ENCODE measurements at regions of chr18 and their contacts with region 1.

Region 1: GRCh38 chr18:12867441-12868123 is 16.5 kb downstream of the PTPN2 start:
- DNase-seq: no peak
- H3K4me3 ChIP-seq: no peak overlapping the region
- H3K27ac ChIP-seq: peak overlapping the region; percentile 54
- H3K4me1 ChIP-seq: peaks cover 43% of the 10 kb centered on the region
- CTCF ChIP-seq: no peak

Region 2: DNA sequence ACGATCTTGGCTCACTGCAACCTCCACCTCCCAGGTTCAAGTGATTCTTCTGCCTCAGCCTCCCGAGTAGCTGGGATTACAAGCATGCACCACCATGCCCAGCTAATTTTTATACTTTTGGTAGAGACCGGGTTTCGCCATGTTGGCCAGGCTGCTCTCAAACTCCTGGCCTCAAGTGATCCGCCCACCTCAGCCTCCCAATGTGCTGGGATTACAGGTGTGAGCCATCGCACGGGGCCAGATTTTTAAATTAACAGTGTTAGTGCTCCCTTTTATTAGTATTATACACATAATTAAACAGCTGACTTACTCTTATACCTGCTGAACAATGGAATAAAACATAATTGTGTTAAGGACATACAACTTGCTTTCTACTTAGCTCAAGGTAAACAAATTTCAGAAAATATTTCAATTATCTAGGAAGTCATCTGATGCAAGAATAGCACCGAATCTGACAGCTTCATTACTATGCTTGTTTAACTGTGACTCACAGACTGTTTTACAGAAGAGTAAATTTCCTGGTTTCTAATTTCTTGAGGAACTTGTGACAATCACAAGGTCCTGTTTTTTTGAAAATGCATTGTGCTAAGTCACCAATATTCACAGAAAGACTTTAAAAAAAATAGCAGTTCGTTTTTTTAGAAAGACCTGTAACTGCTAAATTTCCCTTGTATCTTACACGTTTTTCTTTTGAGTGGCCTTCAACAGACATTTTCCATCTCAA is 260.8 kb before region 1 on chr18:
- CTCF ChIA-PET with region 1: no interaction called
- POLR2A ChIA-PET with region 1: no interaction called
- intact Hi-C with region 1: no loop called
- DNase-seq: no peak
- H3K4me3 ChIP-seq: no peak overlapping the region
- H3K27ac ChIP-seq: no peak overlapping the region
- H3K4me1 ChIP-seq: no peaks in the 10 kb centered on the region
- CTCF ChIP-seq: no peak

Region 3: GRCh38 chr18:12883684-12884405 is 16.3 kb after region 1 on chr18 and contains the start of gene PTPN2:
- CTCF ChIA-PET with region 1: interaction called, 3 read pairs
- POLR2A ChIA-PET with region 1: interaction called, 52 read pairs
- intact Hi-C with region 1: loop called (anchors 2 kb)
- DNase-seq: peak; percentile 95
- H3K4me3 ChIP-seq: peak within 1 kb of the TSS; percentile 78
- H3K27ac ChIP-seq: peak within 1 kb of the TSS; percentile 86
- H3K4me1 ChIP-seq: peaks cover 61% of the 10 kb centered on the region
- CTCF ChIP-seq: no peak
- total RNA-seq, gene PTPN2: 69.7 and 85.0 TPM in 2 replicates

Measured in OCI-LY7 (cell line).